GM12878 (cell line): ENCODE measurements at regions of chr10 and their contacts with region 1.

Region 1: DNA sequence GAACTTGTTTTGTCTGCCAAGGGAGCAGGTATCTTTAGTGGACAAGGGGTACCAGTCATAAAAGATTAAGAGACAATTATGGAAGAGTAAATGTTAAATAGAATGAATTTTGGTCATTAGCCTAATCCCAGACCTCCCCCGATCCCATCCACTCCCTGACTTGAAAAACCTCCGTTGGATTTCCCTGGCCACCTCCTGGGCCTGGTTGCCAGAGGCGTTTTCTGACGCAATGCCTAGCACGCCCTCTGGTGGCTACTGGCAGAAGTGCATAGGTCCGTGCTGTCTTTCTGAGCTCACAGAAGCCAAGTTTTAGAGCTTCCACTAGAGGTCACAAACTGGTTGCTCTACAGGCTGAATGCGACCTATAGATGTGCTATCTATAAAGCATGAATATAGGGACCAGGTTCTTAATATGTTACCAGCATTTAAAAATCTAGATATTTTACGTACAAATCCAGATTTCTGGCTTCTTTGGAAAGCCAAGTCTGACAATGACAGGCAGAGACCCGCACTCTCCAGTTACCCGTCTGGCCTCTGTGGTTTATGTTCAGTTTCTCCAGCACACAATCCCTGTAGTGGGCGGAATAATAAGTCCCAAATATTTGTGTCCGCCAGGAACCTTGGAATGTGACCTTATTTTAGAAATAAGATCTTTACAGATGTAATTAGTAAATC is 39.8 kb downstream of the SPOCK2 start:
- DNase-seq: peak; percentile 81
- ATAC-seq: peak; percentile 98
- H3K4me3 ChIP-seq: no peak overlapping the region
- H3K27ac ChIP-seq: no peak overlapping the region
- H3K4me1 ChIP-seq: peaks cover 3% of the 10 kb centered on the region; the same call in 1 of the 2 replicates
- H3K27me3 ChIP-seq: no peaks in the 10 kb centered on the region
- CTCF ChIP-seq: peak; percentile 99 to 100 (median 99); a peak in 5 of 6 replicates
- EP300 ChIP-seq: no peak
- POLR2A ChIP-seq: no peak
- RAD21 ChIP-seq: peak; percentile 98

Region 2: DNA sequence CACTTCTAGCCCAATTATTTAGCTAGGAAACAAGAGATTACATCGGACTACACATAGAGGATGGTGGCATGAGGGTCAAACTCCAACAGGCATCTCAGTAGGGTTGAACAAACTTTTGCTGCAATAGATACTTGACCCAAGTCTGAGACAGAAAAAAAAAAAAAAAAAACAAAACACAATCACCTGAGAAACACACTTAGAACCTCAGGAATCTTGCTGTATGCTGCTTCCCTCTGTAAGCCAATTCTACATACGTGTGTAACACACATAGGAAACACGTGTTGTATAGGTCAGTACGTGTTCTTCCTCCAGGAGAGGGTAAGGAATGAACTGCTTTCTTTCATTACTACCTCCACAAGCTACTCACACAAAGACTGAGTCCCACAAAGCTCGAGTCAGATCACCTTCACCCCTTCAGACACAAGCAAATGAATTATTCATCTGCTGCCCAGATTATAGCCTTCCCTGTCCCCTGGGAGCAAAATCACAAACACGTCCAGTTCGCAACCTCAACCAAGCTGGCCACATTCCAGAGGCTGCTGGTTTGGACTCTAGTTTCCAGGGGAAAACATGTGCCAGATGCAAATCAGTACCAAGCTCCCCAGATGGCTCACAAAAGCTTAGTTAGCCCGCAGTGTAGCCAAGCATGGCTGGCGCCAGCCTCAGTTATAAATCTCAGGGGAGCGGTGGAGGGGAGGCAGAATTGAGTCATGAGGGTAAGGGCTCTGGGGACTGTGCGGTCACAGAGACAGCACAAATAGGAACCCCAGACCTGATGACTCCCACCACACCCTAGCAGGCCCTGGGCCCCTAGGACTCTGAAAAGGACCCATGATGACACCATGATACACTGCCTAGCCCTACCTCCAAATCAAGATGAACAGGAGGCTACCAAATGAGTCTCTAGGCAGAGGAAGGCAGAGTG is 212.7 kb before region 1 on chr10:
- CTCF ChIA-PET with region 1: interaction called, 8 read pairs
- POLR2A ChIA-PET with region 1: no interaction called
- RAD21 ChIA-PET with region 1: interaction called, 7 read pairs
- SMC1A ChIA-PET with region 1: interaction called, 8 read pairs
- in situ Hi-C with region 1: no loop called
- intact Hi-C with region 1: loop called (anchors 2 kb)
- DNase-seq: peak; percentile 97
- ATAC-seq: peak; percentile 97
- H3K4me3 ChIP-seq: peak overlapping the region; percentile 44
- H3K27ac ChIP-seq: peak overlapping the region; percentile 89
- H3K4me1 ChIP-seq: peaks cover 61% of the 10 kb centered on the region
- H3K27me3 ChIP-seq: no peaks in the 10 kb centered on the region
- CTCF ChIP-seq: no peak
- EP300 ChIP-seq: peak; percentile 87 to 93
- POLR2A ChIP-seq: no peak
- RAD21 ChIP-seq: no peak

Region 3: DNA sequence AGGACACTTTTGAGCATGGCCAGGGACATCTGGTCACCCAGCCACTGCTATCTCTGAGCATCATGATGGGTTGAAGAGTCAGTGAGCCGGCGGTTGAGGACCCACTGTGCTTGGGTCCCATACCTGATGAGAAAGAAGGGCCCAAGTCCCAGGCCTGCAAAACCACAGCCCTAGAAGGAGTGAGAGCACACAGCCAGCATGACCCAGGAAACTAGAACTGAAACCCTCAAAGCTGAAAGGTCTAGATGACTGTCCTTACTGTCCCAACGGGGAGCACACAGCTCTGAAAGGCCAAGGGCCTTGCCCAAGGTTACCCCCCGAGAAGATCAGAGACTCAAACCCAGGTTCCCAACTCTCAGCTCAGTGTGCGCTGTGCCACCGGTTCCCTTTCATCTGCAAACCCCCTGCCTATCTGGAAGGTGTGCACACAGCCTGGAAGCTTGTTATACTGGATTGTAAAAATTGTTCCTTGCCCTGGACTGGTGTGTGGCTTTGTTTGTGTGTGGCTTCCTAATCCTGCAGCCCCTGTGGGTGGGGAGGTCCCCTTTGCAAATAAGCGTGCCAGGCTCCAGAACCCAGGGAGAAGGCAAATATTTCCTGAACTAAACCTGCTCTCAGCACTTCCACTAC is 174.9 kb before region 1 on chr10:
- CTCF ChIA-PET with region 1: no interaction called
- POLR2A ChIA-PET with region 1: no interaction called
- RAD21 ChIA-PET with region 1: no interaction called
- SMC1A ChIA-PET with region 1: no interaction called
- in situ Hi-C with region 1: no loop called
- intact Hi-C with region 1: no loop called
- DNase-seq: peak; percentile 89
- ATAC-seq: peak; percentile 98
- H3K4me3 ChIP-seq: no peak overlapping the region
- H3K27ac ChIP-seq: peak overlapping the region; percentile 70
- H3K4me1 ChIP-seq: peaks cover 30% of the 10 kb centered on the region
- H3K27me3 ChIP-seq: no peaks in the 10 kb centered on the region
- CTCF ChIP-seq: no peak
- EP300 ChIP-seq: 0 out of 4 replicates have a peak, but pooled peaks of 1 of the 2 experiments have one; percentile 34
- POLR2A ChIP-seq: no peak
- RAD21 ChIP-seq: no peak

Region 4: GRCh38 chr10:71916827-71917226 is 131.8 kb before region 1 on chr10:
- CTCF ChIA-PET with region 1: interaction called, 38 read pairs
- POLR2A ChIA-PET with region 1: no interaction called
- RAD21 ChIA-PET with region 1: interaction called, 11 read pairs
- SMC1A ChIA-PET with region 1: interaction called, 24 read pairs
- in situ Hi-C with region 1: no loop called
- intact Hi-C with region 1: loop called (anchors 5 kb)
- DNase-seq: no peak
- ATAC-seq: no peak
- H3K4me3 ChIP-seq: no peak overlapping the region
- H3K27ac ChIP-seq: no peak overlapping the region
- H3K4me1 ChIP-seq: no peaks in the 10 kb centered on the region
- H3K27me3 ChIP-seq: peaks cover 0 to 1% of the 10 kb centered on the region in 2 experiments; a peak in 1 of 4 replicates
- CTCF ChIP-seq: no peak
- EP300 ChIP-seq: no peak
- POLR2A ChIP-seq: no peak
- RAD21 ChIP-seq: no peak

Region 5: GRCh38 chr10:72038458-72039001 is 10.1 kb before region 1 on chr10:
- CTCF ChIA-PET with region 1: interaction called, 15 read pairs
- POLR2A ChIA-PET with region 1: no interaction called
- RAD21 ChIA-PET with region 1: interaction called, 3 read pairs
- SMC1A ChIA-PET with region 1: interaction called, 4 read pairs
- in situ Hi-C with region 1: no loop called
- intact Hi-C with region 1: no loop called
- DNase-seq: no peak
- ATAC-seq: no peak
- H3K4me3 ChIP-seq: no peak overlapping the region
- H3K27ac ChIP-seq: no peak overlapping the region
- H3K4me1 ChIP-seq: no peaks in the 10 kb centered on the region
- H3K27me3 ChIP-seq: no peaks in the 10 kb centered on the region
- CTCF ChIP-seq: no peak
- EP300 ChIP-seq: no peak
- POLR2A ChIP-seq: no peak
- RAD21 ChIP-seq: no peak

Region 6: DNA sequence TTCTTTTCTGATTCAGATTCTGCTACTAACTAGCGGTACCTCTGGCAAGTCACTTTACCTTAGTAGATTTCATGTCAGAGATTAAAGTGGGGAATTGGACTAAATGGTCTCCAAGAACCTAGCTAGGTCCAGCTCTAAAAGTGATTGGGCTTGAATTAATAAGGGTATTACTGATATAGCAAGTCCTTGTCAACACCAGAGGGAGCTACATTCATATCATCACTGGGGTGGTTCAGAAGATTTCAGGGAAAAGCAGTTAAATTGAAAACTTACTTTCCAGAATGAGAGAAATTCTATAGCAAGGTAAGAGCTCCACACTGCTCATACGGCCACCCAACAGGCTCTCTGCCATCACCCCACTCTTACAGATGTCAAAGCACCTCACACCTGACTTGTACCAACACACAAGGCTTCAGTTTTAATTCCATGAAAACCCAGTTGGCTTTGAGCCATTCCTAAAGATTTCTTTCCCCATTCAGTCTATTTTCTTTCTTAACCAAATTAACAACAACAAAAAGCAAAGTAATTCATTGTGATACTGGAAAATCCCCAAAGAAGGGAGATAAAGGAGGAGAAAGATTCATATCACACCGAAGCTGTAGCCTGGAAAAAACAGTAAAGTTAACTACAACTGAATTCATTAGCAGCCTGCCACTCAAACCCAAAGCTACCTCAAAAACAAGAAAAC is 77.7 kb after region 1 on chr10:
- CTCF ChIA-PET with region 1: interaction called, 28 read pairs
- POLR2A ChIA-PET with region 1: no interaction called
- RAD21 ChIA-PET with region 1: interaction called, 25 read pairs
- SMC1A ChIA-PET with region 1: interaction called, 25 read pairs
- in situ Hi-C with region 1: no loop called
- intact Hi-C with region 1: no loop called
- DNase-seq: no peak
- ATAC-seq: peak; percentile 42
- H3K4me3 ChIP-seq: no peak overlapping the region
- H3K27ac ChIP-seq: no peak overlapping the region
- H3K4me1 ChIP-seq: no peaks in the 10 kb centered on the region
- H3K27me3 ChIP-seq: no peaks in the 10 kb centered on the region
- CTCF ChIP-seq: peak; percentile 13 to 46 (median 28); a peak in 4 of 6 replicates
- EP300 ChIP-seq: no peak
- POLR2A ChIP-seq: no peak
- RAD21 ChIP-seq: peak; percentile 57

Region 7: GRCh38 chr10:72223743-72224101 is 175.1 kb after region 1 on chr10:
- CTCF ChIA-PET with region 1: interaction called, 64 read pairs
- POLR2A ChIA-PET with region 1: interaction called, 5 read pairs
- RAD21 ChIA-PET with region 1: interaction called, 86 read pairs
- SMC1A ChIA-PET with region 1: interaction called, 39 read pairs
- in situ Hi-C with region 1: loop called (anchors 5 kb)
- intact Hi-C with region 1: loop called (anchors 2 kb)
- DNase-seq: no peak
- ATAC-seq: peak; percentile 71
- H3K4me3 ChIP-seq: no peak overlapping the region
- H3K27ac ChIP-seq: peak overlapping the region; percentile 47
- H3K4me1 ChIP-seq: peaks cover 29% of the 10 kb centered on the region
- H3K27me3 ChIP-seq: no peaks in the 10 kb centered on the region
- CTCF ChIP-seq: no peak
- EP300 ChIP-seq: no peak
- POLR2A ChIP-seq: no peak
- RAD21 ChIP-seq: no peak

Region 8: GRCh38 chr10:72331601-72332422 is 283.2 kb after region 1 on chr10:
- CTCF ChIA-PET with region 1: interaction called, 152 read pairs
- POLR2A ChIA-PET with region 1: interaction called, 6 read pairs
- RAD21 ChIA-PET with region 1: interaction called, 107 read pairs
- SMC1A ChIA-PET with region 1: interaction called, 62 read pairs
- in situ Hi-C with region 1: loop called (anchors 5 kb)
- intact Hi-C with region 1: loop called (anchors 1 kb)
- DNase-seq: peak; percentile 96
- ATAC-seq: peak; percentile 80
- H3K4me3 ChIP-seq: 0 out of 2 replicates have a peak overlapping the region, but pooled peaks have one; percentile 4
- H3K27ac ChIP-seq: peak overlapping the region; percentile 95
- H3K4me1 ChIP-seq: peaks cover 76% of the 10 kb centered on the region
- H3K27me3 ChIP-seq: no peaks in the 10 kb centered on the region
- CTCF ChIP-seq: peak; percentile 1 to 50 (median 13); a peak in 1 of 6 replicates
- EP300 ChIP-seq: peak; percentile 31 to 85; a peak in 3 of 4 replicates
- POLR2A ChIP-seq: peak; percentile 68
- RAD21 ChIP-seq: no peak